ENCODE measurements at regions of chr2 and their contacts with region 1.

Region 1: GRCh38 chr2:65031341-65032018 is 24.7 kb upstream of the CEP68 start:
- DNase-seq: peak; percentile 96
- H3K4me3 ChIP-seq: peak overlapping the region; percentile 64
- H3K27ac ChIP-seq: peak overlapping the region; percentile 98
- H3K4me1 ChIP-seq: peaks cover 75% of the 10 kb centered on the region
- CTCF ChIP-seq: no peak

Region 2: GRCh38 chr2:64586883-64587481 is 444.5 kb before region 1 on chr2:
- CTCF ChIA-PET with region 1: no interaction called
- POLR2A ChIA-PET with region 1: no interaction called
- intact Hi-C with region 1: loop called (anchors 5 kb)
- DNase-seq: peak; percentile 65
- H3K4me3 ChIP-seq: no peak overlapping the region
- H3K27ac ChIP-seq: no peak overlapping the region
- H3K4me1 ChIP-seq: peaks cover 16% of the 10 kb centered on the region
- CTCF ChIP-seq: peak; percentile 93

Region 3: GRCh38 chr2:64653349-64654062 is 378.0 kb before region 1 on chr2 and contains the start of gene SERTAD2:
- CTCF ChIA-PET with region 1: no interaction called
- POLR2A ChIA-PET with region 1: interaction called, 3 read pairs
- intact Hi-C with region 1: loop called (anchors 5 kb)
- DNase-seq: peak; percentile 95
- H3K4me3 ChIP-seq: peak within 1 kb of the TSS; percentile 93
- H3K27ac ChIP-seq: peak within 1 kb of the TSS; percentile 95
- H3K4me1 ChIP-seq: peaks cover 74% of the 10 kb centered on the region
- CTCF ChIP-seq: peak; percentile 49
- total RNA-seq, gene SERTAD2: 10.7 and 11.5 TPM in 2 replicates

Region 4: GRCh38 chr2:64922482-64923384 is 108.7 kb before region 1 on chr2:
- CTCF ChIA-PET with region 1: interaction called, 4 read pairs
- POLR2A ChIA-PET with region 1: interaction called, 23 read pairs
- intact Hi-C with region 1: loop called (anchors 1 kb)
- DNase-seq: peak; percentile 53
- H3K4me3 ChIP-seq: peak overlapping the region; percentile 38
- H3K27ac ChIP-seq: peak overlapping the region; percentile 59
- H3K4me1 ChIP-seq: peaks cover 37% of the 10 kb centered on the region
- CTCF ChIP-seq: peak; percentile 72

Region 5: DNA sequence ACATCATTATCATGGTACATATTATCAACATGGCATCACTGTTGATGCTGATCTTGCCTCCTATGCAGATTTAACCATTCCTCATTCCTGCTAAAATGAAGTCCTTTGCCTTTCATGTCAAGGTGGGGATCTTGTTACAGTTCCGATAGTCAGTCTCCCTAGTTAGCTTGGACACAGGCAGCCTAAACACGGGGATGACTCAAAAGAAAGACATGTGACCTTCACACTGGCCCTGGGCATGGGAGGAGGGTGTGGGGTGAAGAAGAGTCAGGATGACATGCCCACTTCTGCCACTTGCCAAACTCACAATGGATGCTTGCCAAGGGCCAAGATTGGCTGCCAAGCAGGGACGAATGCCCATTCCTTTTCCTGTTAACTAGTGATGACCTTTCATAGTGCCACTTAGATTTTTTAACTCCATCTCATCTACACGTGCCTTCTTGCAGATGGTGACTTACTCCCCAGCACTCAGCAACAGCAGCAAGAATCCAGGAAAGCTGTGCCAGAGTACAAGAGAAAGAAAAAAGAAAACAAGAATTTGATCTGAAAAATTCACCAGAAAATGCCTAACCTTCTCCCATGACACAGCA is 56.2 kb before region 1 on chr2:
- CTCF ChIA-PET with region 1: no interaction called
- POLR2A ChIA-PET with region 1: no interaction called
- intact Hi-C with region 1: no loop called
- DNase-seq: no peak
- H3K4me3 ChIP-seq: no peak overlapping the region
- H3K27ac ChIP-seq: no peak overlapping the region
- H3K4me1 ChIP-seq: peaks cover 9% of the 10 kb centered on the region
- CTCF ChIP-seq: no peak

Region 6: GRCh38 chr2:64988420-64989125 is 42.9 kb before region 1 on chr2:
- CTCF ChIA-PET with region 1: no interaction called
- POLR2A ChIA-PET with region 1: interaction called, 3 read pairs
- intact Hi-C with region 1: loop called (anchors 1 kb)
- DNase-seq: peak; percentile 66
- H3K4me3 ChIP-seq: peak overlapping the region; percentile 82
- H3K27ac ChIP-seq: peak overlapping the region; percentile 25
- H3K4me1 ChIP-seq: peaks cover 47% of the 10 kb centered on the region
- CTCF ChIP-seq: peak; percentile 62

Region 7: GRCh38 chr2:65300761-65301711 is 269.6 kb after region 1 on chr2:
- CTCF ChIA-PET with region 1: no interaction called
- POLR2A ChIA-PET with region 1: no interaction called
- intact Hi-C with region 1: no loop called
- DNase-seq: peak; percentile 89
- H3K4me3 ChIP-seq: peak overlapping the region; percentile 44
- H3K27ac ChIP-seq: peak overlapping the region; percentile 86
- H3K4me1 ChIP-seq: peaks cover 50% of the 10 kb centered on the region
- CTCF ChIP-seq: 0 out of 2 replicates have a peak, but pooled peaks have one; percentile 31